Heart right ventricle (tissue), 16 donors: ENCODE measurements at regions of chr16 and their contacts with region 1.

Region 1: GRCh38 chr16:55257966-55258613 is 65.9 kb upstream of the IRX6 start:
- DNase-seq: peak; percentile 23 to 39
- ATAC-seq: peak in 6 of 8 donors; percentile 52 to 84 (median 65)
- H3K4me3 ChIP-seq: no peak overlapping the region
- H3K27ac ChIP-seq: no peak overlapping the region
- H3K4me1 ChIP-seq: no peaks in the 10 kb centered on the region
- H3K27me3 ChIP-seq: peaks cover 0 to 7% (median 0%) of the 10 kb centered on the region in 7 donors
- CTCF ChIP-seq: peak; percentile 25 to 69 (median 60)

Region 2: GRCh38 chr16:53549970-53550690 is 1708.0 kb before region 1 on chr16:
- intact Hi-C with region 1: loop called in 1 of 10 experiments (anchors 10 kb)
- DNase-seq: peak in 1 of 2 donors; percentile 54
- ATAC-seq: peak; percentile 73 to 95 (median 90)
- H3K4me3 ChIP-seq: peak overlapping the region in 1 of 10 donors; percentile 17
- H3K27ac ChIP-seq: no peak overlapping the region
- H3K4me1 ChIP-seq: peaks cover 0 to 10% (median 7%) of the 10 kb centered on the region in 9 donors
- H3K27me3 ChIP-seq: peaks cover 0 to 23% (median 0%) of the 10 kb centered on the region in 7 donors
- CTCF ChIP-seq: peak in 8 of 9 donors; percentile 22 to 88 (median 72)

Region 3: DNA sequence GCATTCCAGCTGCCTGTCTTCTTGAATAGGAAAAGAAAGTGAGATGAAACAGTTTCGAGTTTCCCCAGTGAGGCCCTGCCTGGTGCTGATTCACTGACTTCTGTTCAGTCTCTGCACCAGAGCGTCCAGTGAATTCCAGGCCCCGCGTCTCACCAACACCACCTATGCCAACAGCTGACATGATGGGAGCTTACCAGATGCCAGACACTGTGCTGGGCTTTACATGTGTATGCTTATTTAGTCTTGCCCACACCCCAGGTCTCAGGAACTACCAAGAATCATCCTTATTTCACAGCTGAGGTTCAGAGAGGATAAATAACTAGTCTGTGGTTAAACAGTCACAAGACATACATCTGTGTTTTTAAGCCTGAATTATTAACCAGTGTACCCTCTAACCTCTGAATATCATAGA is 36.8 kb after region 1 on chr16:
- intact Hi-C with region 1: no loop called
- DNase-seq: peak; percentile 18 to 43
- ATAC-seq: peak in 7 of 8 donors; percentile 51 to 90 (median 86)
- H3K4me3 ChIP-seq: no peak overlapping the region
- H3K27ac ChIP-seq: peak overlapping the region in 6 of 10 donors; percentile 15 to 63 (median 56)
- H3K4me1 ChIP-seq: peaks cover 0 to 11% (median 0%) of the 10 kb centered on the region in 9 donors
- H3K27me3 ChIP-seq: no peaks in the 10 kb centered on the region
- CTCF ChIP-seq: no peak